GM10248 (cell line): ENCODE measurements at regions of chr12 and their contacts with region 1.

Region 1: DNA sequence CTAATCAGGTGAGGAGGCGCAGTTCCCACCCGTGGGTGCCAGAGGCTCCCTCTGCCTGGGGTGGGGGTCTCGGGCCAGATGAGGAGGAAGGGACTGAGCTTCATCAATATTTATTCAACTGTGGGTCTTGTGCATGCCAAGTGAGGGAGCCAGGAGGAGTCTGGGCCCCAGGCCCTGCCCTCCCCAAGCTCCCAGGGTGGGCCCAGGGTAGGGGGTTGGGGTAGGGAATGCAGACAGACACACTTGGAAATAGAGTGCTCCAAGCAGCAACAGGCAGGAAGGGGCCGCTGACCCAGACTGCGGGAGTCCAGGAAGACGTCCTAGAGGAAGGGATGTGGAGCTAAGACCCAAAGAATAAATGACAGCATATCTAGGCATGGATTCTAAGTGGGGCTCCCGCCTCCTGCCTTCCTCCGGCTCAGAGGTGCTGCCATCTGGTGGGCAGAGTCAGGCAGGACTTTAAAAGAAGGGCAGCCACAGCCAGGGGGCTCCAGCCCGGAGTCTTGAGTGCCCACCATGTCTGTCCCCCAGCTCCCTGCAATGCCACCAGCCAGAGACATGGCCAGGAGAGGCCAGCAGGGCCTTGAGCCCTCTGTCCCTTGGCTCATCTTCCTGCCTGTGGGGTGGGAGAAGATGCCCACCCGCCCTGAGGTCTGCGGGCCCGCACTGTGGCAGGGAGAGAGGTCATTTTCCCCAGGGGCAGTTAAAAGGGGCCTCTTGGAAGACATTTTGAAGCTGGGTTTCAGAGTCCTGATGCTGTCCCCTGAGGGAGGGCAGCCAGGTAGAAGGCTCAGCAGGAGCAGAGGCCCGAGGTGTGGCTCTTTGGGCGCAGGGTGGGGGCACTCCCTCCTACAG is 70.1 kb downstream of the PHETA1 start:
- DNase-seq: peak; percentile 80
- CTCF ChIP-seq: peak; percentile 85

Region 2: DNA sequence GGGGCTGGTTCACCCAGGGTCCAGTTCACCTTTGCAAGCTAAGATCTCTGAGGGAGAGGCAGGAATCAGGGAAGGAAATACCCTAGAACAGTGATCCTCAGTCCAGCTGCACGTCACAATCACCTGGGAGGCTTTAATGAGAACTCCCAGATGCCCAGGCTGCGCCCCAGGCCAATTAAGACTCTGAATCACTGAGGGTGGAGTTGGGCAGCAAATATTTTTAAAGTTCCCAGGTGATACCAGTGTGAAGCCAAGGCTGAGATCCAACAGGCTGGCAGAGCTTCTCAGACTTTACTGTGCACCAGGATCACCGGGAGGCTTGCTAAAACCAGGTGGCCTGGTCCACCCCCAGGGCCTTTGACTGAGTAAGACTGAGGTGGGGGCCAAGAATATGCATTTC is 402.2 kb before region 1 on chr12:
- CTCF ChIA-PET with region 1: interaction called, 36 read pairs
- POLR2A ChIA-PET with region 1: no interaction called
- DNase-seq: no peak
- CTCF ChIP-seq: no peak

Region 3: DNA sequence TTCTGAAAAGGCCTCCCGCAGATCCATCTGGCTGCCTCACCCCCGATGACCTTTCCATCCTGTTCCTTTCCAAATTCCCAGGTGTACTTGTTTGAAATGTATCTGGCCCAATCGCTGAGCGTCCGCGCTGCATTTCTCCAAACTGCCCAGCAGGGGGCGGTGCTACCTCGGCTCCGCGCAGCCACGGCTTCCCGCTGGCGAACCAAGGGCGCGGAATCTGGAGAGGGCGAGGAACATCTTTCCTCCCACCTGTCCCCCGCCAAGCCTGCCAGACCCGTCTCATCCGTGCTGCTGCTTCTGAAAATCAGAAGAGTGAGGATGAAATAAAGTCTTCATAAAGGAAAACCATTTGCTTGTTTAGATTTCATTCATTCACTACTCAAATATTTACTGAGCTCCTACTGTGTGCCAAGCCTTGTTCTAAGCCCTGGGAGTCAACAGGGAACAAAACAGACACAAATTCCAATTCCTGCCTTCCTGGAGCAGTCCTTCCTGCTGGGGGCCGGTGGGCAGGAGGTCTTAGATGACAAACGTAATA is 361.6 kb before region 1 on chr12:
- CTCF ChIA-PET with region 1: interaction called, 11 read pairs
- POLR2A ChIA-PET with region 1: no interaction called
- DNase-seq: peak; percentile 80
- CTCF ChIP-seq: peak; percentile 98

Region 4: DNA sequence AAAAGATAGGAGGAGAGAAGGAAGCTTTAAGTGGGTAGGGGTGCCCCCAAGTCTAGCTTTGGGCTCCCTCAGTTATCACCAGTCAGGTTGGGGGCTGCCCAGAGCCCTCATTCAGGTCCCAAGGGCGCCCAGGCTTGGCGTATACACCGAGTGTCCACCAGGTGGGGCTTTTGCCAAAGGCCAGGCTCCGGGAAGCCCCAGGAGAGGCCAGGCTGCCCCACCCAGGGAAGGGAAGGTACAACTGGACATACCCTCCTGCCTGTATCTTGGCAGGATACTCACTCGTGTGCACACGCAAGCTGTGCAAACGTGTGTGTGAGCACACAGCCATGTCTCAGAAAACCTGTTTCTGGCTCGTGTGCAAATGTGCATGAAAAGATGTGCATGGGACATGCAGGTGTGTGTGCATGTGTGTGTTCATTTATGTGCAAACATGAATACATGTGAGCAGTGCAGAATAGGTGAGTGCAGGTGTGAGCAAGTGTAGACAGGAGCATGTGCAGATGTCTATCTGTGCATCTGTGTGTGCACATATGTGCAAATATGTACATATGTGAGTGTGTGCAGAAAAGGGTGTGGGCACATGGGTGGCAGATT is 274.5 kb before region 1 on chr12:
- CTCF ChIA-PET with region 1: interaction called, 24 read pairs
- POLR2A ChIA-PET with region 1: no interaction called
- DNase-seq: peak; percentile 78
- CTCF ChIP-seq: peak; percentile 72

Region 5: GRCh38 chr12:111309584-111309983 is 10.8 kb after region 1 on chr12:
- CTCF ChIA-PET with region 1: interaction called, 16 read pairs
- POLR2A ChIA-PET with region 1: no interaction called
- DNase-seq: no peak
- CTCF ChIP-seq: no peak

Region 6: GRCh38 chr12:111322336-111323250 is 23.8 kb after region 1 on chr12:
- CTCF ChIA-PET with region 1: no interaction called
- POLR2A ChIA-PET with region 1: no interaction called
- DNase-seq: no peak
- CTCF ChIP-seq: no peak